T-cell (primary cell): ENCODE measurements at regions of chr10 and their contacts with region 1.

Region 1: GRCh38 chr10:97822261-97822687 is 27.4 kb upstream of the GOLGA7B start:
- DNase-seq: no peak
- ATAC-seq: no peak
- H3K4me3 ChIP-seq: no peak overlapping the region
- H3K4me3 Mint-ChIP-seq: no peak overlapping the region
- H3K27ac ChIP-seq: no peak overlapping the region
- H3K27ac Mint-ChIP-seq: no peak overlapping the region
- H3K4me1 ChIP-seq: no peaks in the 10 kb centered on the region
- H3K4me1 Mint-ChIP-seq: peaks cover 0 to 9% (median 0%) of the 10 kb centered on the region in 3 donors
- H3K27me3 ChIP-seq: peaks cover 0 to 26% of the 10 kb centered on the region in 2 experiments
- H3K27me3 Mint-ChIP-seq: no peaks in the 10 kb centered on the region

Region 2: GRCh38 chr10:97612386-97612785 is 209.9 kb before region 1 on chr10:
- CTCF ChIA-PET with region 1: no interaction called
- POLR2A ChIA-PET with region 1: interaction called in 1 of 2 experiments, 11 read pairs
- DNase-seq: peak in 1 of 35 experiments; percentile 13
- ATAC-seq: no peak
- H3K4me3 ChIP-seq: no peak overlapping the region
- H3K4me3 Mint-ChIP-seq: no peak overlapping the region
- H3K27ac ChIP-seq: no peak overlapping the region
- H3K27ac Mint-ChIP-seq: no peak overlapping the region
- H3K4me1 ChIP-seq: no peaks in the 10 kb centered on the region
- H3K4me1 Mint-ChIP-seq: no peaks in the 10 kb centered on the region
- H3K27me3 ChIP-seq: peaks cover 0 to 6% of the 10 kb centered on the region in 2 experiments
- H3K27me3 Mint-ChIP-seq: no peaks in the 10 kb centered on the region